GM12878 (cell line): ENCODE measurements at regions of chr3 and their contacts with region 1.

Region 1: GRCh38 chr3:39295184-39295775 is 15.4 kb upstream of the CX3CR1 start:
- DNase-seq: peak; percentile 95
- ATAC-seq: peak; percentile 86
- H3K4me3 ChIP-seq: no peak overlapping the region
- H3K27ac ChIP-seq: peak overlapping the region; percentile 87
- H3K4me1 ChIP-seq: peaks cover 30% of the 10 kb centered on the region
- H3K27me3 ChIP-seq: no peaks in the 10 kb centered on the region
- CTCF ChIP-seq: no peak
- EP300 ChIP-seq: peak; percentile 91 to 94
- POLR2A ChIP-seq: no peak
- RAD21 ChIP-seq: 0 out of 2 replicates have a peak, but pooled peaks have one; percentile 2

Region 2: GRCh38 chr3:38992117-38992760 is 303.0 kb before region 1 on chr3:
- CTCF ChIA-PET with region 1: no interaction called
- POLR2A ChIA-PET with region 1: no interaction called
- RAD21 ChIA-PET with region 1: no interaction called
- SMC1A ChIA-PET with region 1: no interaction called
- in situ Hi-C with region 1: no loop called
- intact Hi-C with region 1: no loop called
- DNase-seq: no peak
- ATAC-seq: no peak
- H3K4me3 ChIP-seq: no peak overlapping the region
- H3K27ac ChIP-seq: no peak overlapping the region
- H3K4me1 ChIP-seq: no peaks in the 10 kb centered on the region
- H3K27me3 ChIP-seq: peaks cover 0 to 3% of the 10 kb centered on the region in 2 experiments; a peak in 3 of 4 replicates
- CTCF ChIP-seq: no peak
- EP300 ChIP-seq: no peak
- POLR2A ChIP-seq: no peak
- RAD21 ChIP-seq: no peak

Region 3: GRCh38 chr3:39216176-39216790 is 79.0 kb before region 1 on chr3:
- CTCF ChIA-PET with region 1: interaction called, 389 read pairs
- POLR2A ChIA-PET with region 1: interaction called, 3 read pairs
- RAD21 ChIA-PET with region 1: interaction called, 7 read pairs
- SMC1A ChIA-PET with region 1: interaction called, 237 read pairs
- in situ Hi-C with region 1: no loop called
- intact Hi-C with region 1: no loop called
- DNase-seq: peak; percentile 68
- ATAC-seq: peak; percentile 97
- H3K4me3 ChIP-seq: no peak overlapping the region
- H3K27ac ChIP-seq: no peak overlapping the region; the same call in 1 of the 2 replicates
- H3K4me1 ChIP-seq: peaks cover 26% of the 10 kb centered on the region
- H3K27me3 ChIP-seq: no peaks in the 10 kb centered on the region
- CTCF ChIP-seq: no peak
- EP300 ChIP-seq: peak; percentile 85 to 96
- POLR2A ChIP-seq: no peak
- RAD21 ChIP-seq: no peak

Region 4: GRCh38 chr3:39317571-39318169 is 22.4 kb after region 1 on chr3:
- CTCF ChIA-PET with region 1: interaction called, 43 read pairs
- POLR2A ChIA-PET with region 1: interaction called, 4 read pairs
- RAD21 ChIA-PET with region 1: interaction called, 4 read pairs
- SMC1A ChIA-PET with region 1: interaction called, 5 read pairs
- in situ Hi-C with region 1: no loop called
- intact Hi-C with region 1: loop called (anchors 2 kb)
- DNase-seq: no peak
- ATAC-seq: peak; percentile 77
- H3K4me3 ChIP-seq: no peak overlapping the region
- H3K27ac ChIP-seq: no peak overlapping the region
- H3K4me1 ChIP-seq: 0 out of 2 replicates have a peak, but pooled peaks cover 3% of the 10 kb centered on the region
- H3K27me3 ChIP-seq: no peaks in the 10 kb centered on the region
- CTCF ChIP-seq: no peak
- EP300 ChIP-seq: no peak
- POLR2A ChIP-seq: no peak
- RAD21 ChIP-seq: no peak

Region 5: DNA sequence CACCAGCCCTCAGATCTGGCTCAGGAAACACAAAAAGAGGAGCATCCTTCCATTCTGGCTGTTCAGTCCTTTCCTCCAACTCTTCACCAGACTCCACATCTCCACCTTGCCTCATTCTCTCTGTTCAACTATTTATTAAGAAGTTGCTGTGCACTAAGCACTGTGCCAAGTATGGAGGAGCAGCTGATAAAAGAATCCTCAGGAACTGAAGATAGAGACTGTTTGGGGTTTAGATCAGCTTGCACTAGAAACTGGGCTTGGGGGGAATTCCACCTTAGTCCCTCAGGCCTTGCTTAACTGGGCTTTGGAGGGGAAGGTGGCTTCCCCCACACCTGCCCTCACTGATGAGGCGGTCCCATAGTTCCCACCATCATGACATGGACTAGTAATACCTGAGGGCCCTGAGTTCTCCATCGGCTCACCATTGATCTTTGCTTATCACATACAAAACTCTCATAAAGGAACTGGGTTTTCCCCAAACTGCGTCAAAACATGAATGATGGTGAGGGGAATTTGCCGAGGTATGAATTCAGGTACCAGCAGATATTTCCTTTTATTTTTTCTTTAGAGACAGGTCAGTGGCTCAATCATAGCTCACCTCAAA is 32.6 kb after region 1 on chr3:
- CTCF ChIA-PET with region 1: interaction called, 43 read pairs
- POLR2A ChIA-PET with region 1: interaction called, 11 read pairs
- RAD21 ChIA-PET with region 1: interaction called, 19 read pairs
- SMC1A ChIA-PET with region 1: interaction called, 15 read pairs
- in situ Hi-C with region 1: no loop called
- intact Hi-C with region 1: loop called (anchors 1 kb)
- DNase-seq: peak; percentile 67
- ATAC-seq: peak; percentile 87
- H3K4me3 ChIP-seq: no peak overlapping the region
- H3K27ac ChIP-seq: peak overlapping the region; percentile 84
- H3K4me1 ChIP-seq: peaks cover 23% of the 10 kb centered on the region
- H3K27me3 ChIP-seq: no peaks in the 10 kb centered on the region
- CTCF ChIP-seq: no peak
- EP300 ChIP-seq: peak in 1 of 2 experiments; percentile 63; a peak in 2 of 4 replicates
- POLR2A ChIP-seq: no peak
- RAD21 ChIP-seq: no peak

Region 6: DNA sequence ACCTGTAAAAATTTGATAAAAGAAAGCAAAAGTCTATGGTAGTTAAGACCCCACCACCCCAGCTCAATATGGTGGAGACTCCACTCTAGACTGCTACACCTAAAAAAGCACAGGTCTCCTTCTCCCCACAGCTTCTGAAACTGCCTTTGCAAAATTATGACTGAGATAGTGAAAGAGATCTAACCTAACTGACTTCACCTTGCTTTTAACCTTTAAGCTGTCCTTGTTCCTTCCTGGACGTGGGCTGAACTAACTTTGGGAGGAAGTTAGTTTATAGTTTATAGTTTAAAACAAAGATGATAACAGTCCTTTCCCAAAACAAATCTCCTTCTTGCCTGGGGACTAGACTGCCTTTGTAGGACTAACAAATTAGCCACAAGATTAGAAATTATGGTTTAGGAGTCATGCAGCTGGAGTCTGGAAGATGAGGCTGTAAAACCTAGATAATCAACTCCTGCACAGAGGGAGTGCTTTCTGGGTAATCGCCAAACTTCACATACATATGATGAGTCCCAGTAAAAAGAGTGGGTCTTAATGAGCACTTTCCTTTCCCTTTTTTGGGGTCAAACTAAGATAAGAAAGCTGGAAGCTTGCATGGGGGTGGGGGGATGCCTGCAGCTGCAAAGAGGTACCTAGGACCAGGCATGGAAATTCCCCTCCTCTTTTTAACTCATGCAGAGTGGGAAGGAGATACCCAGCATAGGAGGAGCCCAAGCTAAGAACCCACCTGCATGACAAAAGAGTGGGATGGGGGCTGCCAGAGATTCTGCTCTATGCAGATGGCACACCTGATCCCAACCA is 51.7 kb after region 1 on chr3:
- CTCF ChIA-PET with region 1: interaction called, 37 read pairs
- POLR2A ChIA-PET with region 1: interaction called, 5 read pairs
- RAD21 ChIA-PET with region 1: interaction called, 26 read pairs
- SMC1A ChIA-PET with region 1: interaction called, 33 read pairs
- in situ Hi-C with region 1: no loop called
- intact Hi-C with region 1: no loop called
- DNase-seq: no peak
- ATAC-seq: peak; percentile 91
- H3K4me3 ChIP-seq: peak overlapping the region; percentile 0; the same call in 1 of the 2 replicates
- H3K27ac ChIP-seq: peak overlapping the region; percentile 61
- H3K4me1 ChIP-seq: peaks cover 17% of the 10 kb centered on the region
- H3K27me3 ChIP-seq: no peaks in the 10 kb centered on the region
- CTCF ChIP-seq: no peak
- EP300 ChIP-seq: no peak
- POLR2A ChIP-seq: no peak
- RAD21 ChIP-seq: no peak

Region 7: GRCh38 chr3:39383045-39383880 is 88.0 kb after region 1 on chr3 and contains the start of gene SLC25A38:
- CTCF ChIA-PET with region 1: interaction called, 323 read pairs
- POLR2A ChIA-PET with region 1: interaction called, 7 read pairs
- RAD21 ChIA-PET with region 1: interaction called, 232 read pairs
- SMC1A ChIA-PET with region 1: interaction called, 234 read pairs
- in situ Hi-C with region 1: loop called (anchors 5 kb)
- intact Hi-C with region 1: loop called (anchors 1 kb)
- DNase-seq: no peak
- ATAC-seq: peak; percentile 84
- H3K4me3 ChIP-seq: peak within 1 kb of the TSS; percentile 89
- H3K27ac ChIP-seq: peak within 1 kb of the TSS; percentile 84
- H3K4me1 ChIP-seq: peaks cover 7% of the 10 kb centered on the region
- H3K27me3 ChIP-seq: no peaks in the 10 kb centered on the region
- CTCF ChIP-seq: peak; percentile 35 to 46 (median 36); a peak in 5 of 6 replicates
- EP300 ChIP-seq: no peak
- POLR2A ChIP-seq: peak; percentile 71
- RAD21 ChIP-seq: no peak; the same call in 1 of the 2 replicates
- polyA plus RNA-seq, gene SLC25A38: 15.2 to 21.8 TPM